Transverse colon (tissue), 4 donors: ENCODE measurements at regions of chr18 and their contacts with region 1.

Region 1: DNA sequence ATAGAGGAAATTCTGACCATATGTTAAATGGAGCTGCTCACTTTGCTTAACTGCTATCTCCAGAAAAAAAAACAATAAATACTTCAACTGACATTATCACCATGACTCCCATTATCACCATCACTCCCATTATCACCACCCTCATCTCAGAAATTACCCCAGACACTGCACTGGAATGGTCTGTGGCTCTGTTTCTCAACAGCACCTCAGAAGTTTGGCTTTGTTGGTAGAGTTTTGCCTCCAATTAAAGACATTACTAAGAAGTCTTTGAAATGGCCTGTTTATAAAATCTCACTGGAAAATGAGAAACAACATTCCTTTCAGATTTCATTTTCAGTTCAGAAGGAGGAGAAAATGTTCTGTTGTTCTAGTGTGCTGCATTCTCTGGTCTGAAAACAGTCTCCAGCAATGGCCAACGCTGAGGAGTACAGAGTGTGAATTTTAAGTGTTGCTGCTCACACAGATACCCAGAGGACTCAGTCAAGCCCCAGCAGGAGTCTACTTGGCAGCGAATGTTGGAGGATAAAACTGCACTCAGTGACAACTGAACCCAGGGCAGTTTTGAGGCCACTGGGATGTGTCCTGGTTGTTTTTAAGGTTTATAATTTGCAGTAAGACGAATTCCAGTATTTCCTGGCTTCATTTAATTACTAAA is 364.5 kb upstream of the CDH2 start:
- DNase-seq: no peak
- H3K4me3 ChIP-seq: no peak overlapping the region
- H3K27ac ChIP-seq: no peak overlapping the region
- H3K4me1 ChIP-seq: no peaks in the 10 kb centered on the region
- H3K27me3 ChIP-seq: no peaks in the 10 kb centered on the region
- CTCF ChIP-seq: no peak
- EP300 ChIP-seq: no peak
- POLR2A ChIP-seq: no peak

Region 2: GRCh38 chr18:28439870-28440269 is 101.5 kb before region 1 on chr18:
- in situ Hi-C with region 1: loop called in 1 of 4 experiments (anchors 25 kb)
- intact Hi-C with region 1: no loop called
- DNase-seq: no peak
- H3K4me3 ChIP-seq: no peak overlapping the region
- H3K27ac ChIP-seq: no peak overlapping the region
- H3K4me1 ChIP-seq: no peaks in the 10 kb centered on the region
- H3K27me3 ChIP-seq: no peaks in the 10 kb centered on the region
- CTCF ChIP-seq: no peak
- EP300 ChIP-seq: no peak
- POLR2A ChIP-seq: no peak